Activated CD4-positive, alpha-beta memory T cell treated with anti-CD3 and anti-CD28 coated beads for 36 hours (primary cell): ENCODE measurements at regions of chr10 and their contacts with region 1.

Region 1: DNA sequence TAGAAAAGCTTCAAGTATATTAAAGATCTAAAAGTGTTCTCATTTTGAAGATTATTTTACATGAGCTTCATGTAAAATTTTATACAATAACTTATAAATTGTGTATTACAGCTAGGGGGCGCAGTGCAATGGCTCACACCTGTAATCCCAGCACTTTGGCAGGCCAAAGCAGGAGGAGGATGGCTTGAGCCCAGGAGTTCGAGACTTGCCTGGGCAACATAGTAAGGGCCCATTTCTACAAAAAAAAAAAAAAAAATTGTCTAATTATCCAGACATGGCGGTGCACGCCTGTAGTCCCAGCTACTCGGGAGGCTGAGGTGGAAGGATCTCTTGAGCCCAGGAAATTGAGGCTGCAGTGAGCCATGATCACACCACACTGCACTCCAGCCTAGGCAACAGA is 16.6 kb downstream of the ACBD5 start:
- DNase-seq: peak; percentile 48
- H3K4me3 Mint-ChIP-seq: no peak overlapping the region
- H3K27ac Mint-ChIP-seq: no peak overlapping the region
- H3K4me1 Mint-ChIP-seq: peaks cover 17% of the 10 kb centered on the region
- H3K27me3 Mint-ChIP-seq: no peaks in the 10 kb centered on the region

Region 2: DNA sequence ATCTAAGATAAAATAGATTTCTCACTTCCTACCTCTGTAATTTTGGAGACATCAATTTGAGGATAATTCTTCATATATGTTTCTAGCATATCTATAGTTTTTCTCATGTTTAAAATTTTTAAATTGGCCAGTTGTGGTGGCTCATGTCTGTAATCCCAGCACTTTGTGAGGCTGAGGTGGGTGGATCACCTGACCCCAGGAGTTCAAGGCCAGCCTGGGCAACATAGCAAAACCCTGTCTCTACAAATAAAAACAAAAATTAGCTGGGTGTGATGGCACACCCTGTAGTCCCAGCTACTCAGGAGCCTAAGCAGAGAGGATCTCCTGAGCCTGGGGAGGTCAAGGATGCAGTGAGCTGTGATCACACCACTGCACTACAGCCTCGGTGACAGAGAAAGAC is 11.7 kb after region 1 on chr10:
- CTCF ChIA-PET with region 1: interaction called, 24 read pairs
- POLR2A ChIA-PET with region 1: interaction called, 3 read pairs
- intact Hi-C with region 1: loop called (anchors 2 kb)
- DNase-seq: no peak
- H3K4me3 Mint-ChIP-seq: no peak overlapping the region
- H3K27ac Mint-ChIP-seq: no peak overlapping the region
- H3K4me1 Mint-ChIP-seq: peaks cover 10% of the 10 kb centered on the region
- H3K27me3 Mint-ChIP-seq: no peaks in the 10 kb centered on the region

Region 3: DNA sequence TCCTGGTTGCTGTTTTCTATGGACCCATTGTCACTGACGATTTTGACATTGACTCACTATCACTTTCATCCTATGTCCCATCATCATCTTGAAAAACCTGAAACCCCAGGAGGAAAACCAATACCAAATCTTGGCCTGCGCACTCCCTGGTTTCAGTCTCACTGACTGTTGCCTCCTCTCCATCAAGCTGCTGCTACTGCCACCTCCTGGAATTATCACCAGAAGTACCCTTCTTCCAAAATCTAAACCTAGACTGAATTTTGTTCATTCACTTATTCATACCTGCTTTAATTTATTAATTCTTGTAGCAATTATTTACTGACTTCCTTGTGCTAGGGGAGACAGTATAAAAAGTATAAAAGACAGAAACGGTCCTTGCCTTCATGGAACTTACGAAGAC is 61.1 kb after region 1 on chr10:
- CTCF ChIA-PET with region 1: interaction called, 12 read pairs
- POLR2A ChIA-PET with region 1: no interaction called
- intact Hi-C with region 1: loop called (anchors 1 kb)
- DNase-seq: peak; percentile 70
- H3K4me3 Mint-ChIP-seq: no peak overlapping the region
- H3K27ac Mint-ChIP-seq: no peak overlapping the region
- H3K4me1 Mint-ChIP-seq: peaks cover 6% of the 10 kb centered on the region
- H3K27me3 Mint-ChIP-seq: no peaks in the 10 kb centered on the region

Region 4: GRCh38 chr10:27319752-27320561 is 96.0 kb after region 1 on chr10:
- CTCF ChIA-PET with region 1: no interaction called
- POLR2A ChIA-PET with region 1: no interaction called
- intact Hi-C with region 1: no loop called
- DNase-seq: peak; percentile 43
- H3K4me3 Mint-ChIP-seq: no peak overlapping the region
- H3K27ac Mint-ChIP-seq: no peak overlapping the region
- H3K4me1 Mint-ChIP-seq: peaks cover 3% of the 10 kb centered on the region
- H3K27me3 Mint-ChIP-seq: peaks cover 12% of the 10 kb centered on the region

Region 5: GRCh38 chr10:27360581-27361172 is 136.7 kb after region 1 on chr10:
- CTCF ChIA-PET with region 1: interaction called, 11 read pairs
- POLR2A ChIA-PET with region 1: no interaction called
- intact Hi-C with region 1: loop called (anchors 2 kb)
- DNase-seq: peak; percentile 88
- H3K4me3 Mint-ChIP-seq: no peak overlapping the region
- H3K27ac Mint-ChIP-seq: no peak overlapping the region
- H3K4me1 Mint-ChIP-seq: no peaks in the 10 kb centered on the region
- H3K27me3 Mint-ChIP-seq: no peaks in the 10 kb centered on the region